GM12878 (cell line): ENCODE measurements at regions of chrX and their contacts with region 1.

Region 1: DNA sequence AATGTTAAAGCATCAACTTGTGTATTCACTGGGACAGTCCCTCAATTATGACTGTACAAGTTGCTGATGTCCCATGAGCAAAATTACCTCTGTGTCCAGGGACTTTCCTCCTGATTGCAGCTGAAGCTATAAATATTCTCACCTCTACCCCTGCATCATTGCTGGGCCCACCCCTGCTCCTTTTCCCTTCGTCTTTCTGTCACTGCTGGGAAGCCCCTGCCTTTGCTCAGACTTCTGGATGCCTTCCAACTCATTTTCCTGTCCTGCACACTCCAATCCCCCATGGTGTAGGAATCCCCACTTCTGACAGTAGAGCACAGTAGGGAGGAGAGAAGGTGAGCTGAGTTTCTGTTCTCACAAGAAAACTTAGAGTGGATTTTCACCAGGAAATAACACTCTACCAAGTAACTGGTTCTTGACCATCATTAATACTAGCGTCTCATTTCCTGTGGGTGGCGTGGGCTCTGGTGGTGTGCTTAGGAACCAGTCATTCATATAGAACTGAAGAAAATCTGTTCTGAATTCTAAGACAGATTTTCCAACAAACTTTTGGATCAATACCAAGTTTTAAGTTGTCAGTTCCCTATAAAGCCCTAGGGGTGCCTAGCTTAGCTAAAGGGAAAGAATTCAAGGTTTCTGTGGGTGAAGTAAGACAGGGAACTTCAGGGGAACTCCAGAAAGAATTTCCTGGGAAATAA is 136.2 kb upstream of the MED14 start:
- DNase-seq: peak; percentile 87
- ATAC-seq: peak; percentile 89
- H3K4me3 ChIP-seq: no peak overlapping the region
- H3K27ac ChIP-seq: peak overlapping the region; percentile 68
- H3K4me1 ChIP-seq: peaks cover 6% of the 10 kb centered on the region; the same call in 1 of the 2 replicates
- H3K27me3 ChIP-seq: no peaks in the 10 kb centered on the region
- CTCF ChIP-seq: peak in 1 of 3 experiments; percentile 27; a peak in 1 of 6 replicates
- EP300 ChIP-seq: peak; percentile 54 to 71; a peak in 2 of 4 replicates
- POLR2A ChIP-seq: no peak
- RAD21 ChIP-seq: peak; percentile 25; the same call in 1 of the 2 replicates

Region 2: DNA sequence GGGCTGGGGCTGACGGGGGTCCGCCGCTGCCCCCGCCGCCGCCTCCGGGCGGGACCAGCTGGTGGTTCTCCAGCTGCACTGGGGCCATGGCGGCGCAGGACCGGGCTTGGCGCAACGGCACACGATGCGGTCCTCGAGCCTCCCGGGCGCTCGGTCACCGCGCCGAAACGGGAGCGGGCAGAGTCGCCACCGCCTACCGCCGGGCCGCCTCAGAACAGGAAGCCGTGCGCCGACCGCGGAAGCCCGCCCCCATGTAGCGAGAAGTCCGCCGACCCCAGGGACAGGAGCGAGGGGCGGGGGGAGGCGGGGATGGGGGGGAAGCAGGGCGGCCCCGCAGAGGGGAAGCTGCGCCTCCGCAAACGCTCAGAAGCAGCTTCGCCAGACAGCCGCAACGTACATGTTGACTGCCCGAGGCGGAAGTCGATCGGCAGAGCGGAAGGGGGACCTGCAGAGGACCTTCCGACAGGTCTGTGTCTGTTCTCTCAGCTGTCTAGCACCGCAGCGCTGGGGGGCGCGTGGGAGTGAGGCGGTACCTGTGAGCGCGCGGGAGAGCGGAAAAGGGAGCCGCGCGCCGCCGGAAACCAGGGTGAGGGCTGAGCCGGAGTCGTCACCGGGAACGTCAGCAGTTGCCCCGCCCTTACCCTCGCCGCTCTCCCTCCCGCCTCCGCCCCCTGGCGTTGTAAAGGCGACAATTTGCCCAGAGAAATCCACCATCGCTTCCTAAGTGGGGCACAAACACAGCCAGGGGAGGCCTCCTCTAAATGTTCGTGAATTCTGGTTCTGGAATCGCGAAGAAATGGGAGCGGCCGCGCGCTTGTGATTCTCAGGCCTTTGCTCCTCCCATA is 136.0 kb before region 1 on chrX and contains the start of gene MED14:
- CTCF ChIA-PET with region 1: no interaction called
- POLR2A ChIA-PET with region 1: no interaction called
- RAD21 ChIA-PET with region 1: no interaction called
- SMC1A ChIA-PET with region 1: no interaction called
- in situ Hi-C with region 1: no loop called
- intact Hi-C with region 1: loop called (anchors 5 kb)
- DNase-seq: peak; percentile 73
- ATAC-seq: peak; percentile 92
- H3K4me3 ChIP-seq: peak within 1 kb of the TSS; percentile 86
- H3K27ac ChIP-seq: peak within 1 kb of the TSS; percentile 92
- H3K4me1 ChIP-seq: no peaks in the 10 kb centered on the region; the same call in 1 of the 2 replicates
- H3K27me3 ChIP-seq: no peaks in the 10 kb centered on the region
- CTCF ChIP-seq: peak; percentile 62 to 64 (median 62)
- EP300 ChIP-seq: 0 out of 4 replicates have a peak, but pooled peaks of 1 of the 2 experiments have one; percentile 5
- POLR2A ChIP-seq: peak; percentile 93
- RAD21 ChIP-seq: no peak
- polyA plus RNA-seq, gene MED14: 8.8 to 17.0 TPM

Region 3: DNA sequence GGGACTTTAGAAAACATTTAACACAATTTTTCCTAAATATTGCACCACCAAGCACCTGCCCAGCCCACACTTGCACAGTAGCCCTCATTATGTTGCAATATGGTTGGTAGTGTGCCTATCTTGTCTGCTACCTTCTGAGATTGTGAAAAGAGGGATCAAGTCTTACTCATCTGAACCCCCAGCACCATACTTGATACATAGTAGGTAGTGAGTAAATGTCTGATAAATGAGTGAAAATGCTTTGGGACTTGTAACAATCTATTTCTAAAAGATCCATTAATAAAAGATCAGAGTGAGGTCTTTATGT is 17.8 kb before region 1 on chrX:
- CTCF ChIA-PET with region 1: no interaction called
- POLR2A ChIA-PET with region 1: interaction called, 3 read pairs
- RAD21 ChIA-PET with region 1: interaction called, 5 read pairs
- SMC1A ChIA-PET with region 1: interaction called, 10 read pairs
- in situ Hi-C with region 1: no loop called
- intact Hi-C with region 1: no loop called
- DNase-seq: no peak
- ATAC-seq: peak; percentile 45
- H3K4me3 ChIP-seq: no peak overlapping the region
- H3K27ac ChIP-seq: peak overlapping the region; percentile 13; the same call in 1 of the 2 replicates
- H3K4me1 ChIP-seq: 0 out of 2 replicates have a peak, but pooled peaks cover 3% of the 10 kb centered on the region
- H3K27me3 ChIP-seq: no peaks in the 10 kb centered on the region
- CTCF ChIP-seq: no peak
- EP300 ChIP-seq: no peak
- POLR2A ChIP-seq: no peak
- RAD21 ChIP-seq: no peak

Region 4: GRCh38 chrX:40952855-40953254 is 81.3 kb after region 1 on chrX:
- CTCF ChIA-PET with region 1: no interaction called
- POLR2A ChIA-PET with region 1: interaction called, 4 read pairs
- RAD21 ChIA-PET with region 1: interaction called, 11 read pairs
- SMC1A ChIA-PET with region 1: interaction called, 3 read pairs
- in situ Hi-C with region 1: no loop called
- intact Hi-C with region 1: loop called (anchors 2 kb)
- DNase-seq: peak; percentile 26
- ATAC-seq: peak; percentile 84
- H3K4me3 ChIP-seq: 0 out of 2 replicates have a peak overlapping the region, but pooled peaks have one; percentile 25
- H3K27ac ChIP-seq: peak overlapping the region; percentile 22; the same call in 1 of the 2 replicates
- H3K4me1 ChIP-seq: no peaks in the 10 kb centered on the region; the same call in none of the 2 replicates
- H3K27me3 ChIP-seq: no peaks in the 10 kb centered on the region
- CTCF ChIP-seq: no peak
- EP300 ChIP-seq: no peak
- POLR2A ChIP-seq: no peak
- RAD21 ChIP-seq: no peak